H1 (cell line): ENCODE measurements at regions of chr2 and their contacts with region 1.

Region 1: GRCh38 chr2:231925303-231926179 is 655 bp downstream of the NPPC start:
- DNase-seq: peak; percentile 59 to 93
- H3K4me3 ChIP-seq: peak overlapping the region; percentile 52 to 75 (median 66)
- H3K27ac ChIP-seq: no peak overlapping the region
- H3K4me1 ChIP-seq: peaks cover 3 to 20% (median 14%) of the 10 kb centered on the region in 4 experiments
- H3K27me3 ChIP-seq: peaks cover 24 to 55% (median 43%) of the 10 kb centered on the region in 4 experiments
- CTCF ChIP-seq: peak in 2 of 3 experiments; percentile 80 to 89; a peak in 3 of 4 replicates
- EP300 ChIP-seq: no peak
- POLR2A ChIP-seq: no peak
- RAD21 ChIP-seq: peak; percentile 56 to 73

Region 2: GRCh38 chr2:231910771-231911170 is 14.8 kb before region 1 on chr2:
- CTCF ChIA-PET with region 1: interaction called, 220 read pairs
- POLR2A ChIA-PET with region 1: interaction called, 3 read pairs
- DNase-seq: no peak
- H3K4me3 ChIP-seq: no peak overlapping the region
- H3K27ac ChIP-seq: no peak overlapping the region
- H3K4me1 ChIP-seq: peaks cover 0 to 6% (median under 1%) of the 10 kb centered on the region in 4 experiments; a peak in 1 of 7 replicates
- H3K27me3 ChIP-seq: no peaks in the 10 kb centered on the region
- CTCF ChIP-seq: no peak
- EP300 ChIP-seq: no peak
- POLR2A ChIP-seq: no peak
- RAD21 ChIP-seq: no peak

Region 3: DNA sequence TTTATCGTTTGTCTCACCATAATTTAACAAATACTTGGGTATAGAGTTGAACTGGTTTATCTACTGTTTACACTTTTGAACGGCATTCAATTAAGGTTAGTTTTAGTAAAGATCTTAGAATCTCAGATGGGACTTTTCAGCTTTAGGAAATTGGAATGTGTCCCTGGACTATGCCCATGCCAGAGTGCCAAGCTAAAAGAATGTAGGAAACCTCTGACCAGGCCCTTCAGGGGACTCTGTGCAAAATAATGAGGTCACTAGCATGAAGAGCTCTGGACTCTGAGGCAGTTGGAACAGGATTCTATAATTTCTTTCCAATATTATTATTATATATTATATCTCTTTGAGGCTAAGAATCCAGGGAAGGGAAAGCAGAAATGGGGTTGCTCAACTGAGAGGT is 49.5 kb after region 1 on chr2:
- CTCF ChIA-PET with region 1: interaction called, 10 read pairs
- POLR2A ChIA-PET with region 1: no interaction called
- DNase-seq: no peak
- H3K4me3 ChIP-seq: no peak overlapping the region
- H3K27ac ChIP-seq: no peak overlapping the region
- H3K4me1 ChIP-seq: peaks cover 0 to 3% (median 0%) of the 10 kb centered on the region in 4 experiments; a peak in 1 of 7 replicates
- H3K27me3 ChIP-seq: no peaks in the 10 kb centered on the region
- CTCF ChIP-seq: no peak
- EP300 ChIP-seq: no peak
- POLR2A ChIP-seq: no peak
- RAD21 ChIP-seq: no peak

Region 4: DNA sequence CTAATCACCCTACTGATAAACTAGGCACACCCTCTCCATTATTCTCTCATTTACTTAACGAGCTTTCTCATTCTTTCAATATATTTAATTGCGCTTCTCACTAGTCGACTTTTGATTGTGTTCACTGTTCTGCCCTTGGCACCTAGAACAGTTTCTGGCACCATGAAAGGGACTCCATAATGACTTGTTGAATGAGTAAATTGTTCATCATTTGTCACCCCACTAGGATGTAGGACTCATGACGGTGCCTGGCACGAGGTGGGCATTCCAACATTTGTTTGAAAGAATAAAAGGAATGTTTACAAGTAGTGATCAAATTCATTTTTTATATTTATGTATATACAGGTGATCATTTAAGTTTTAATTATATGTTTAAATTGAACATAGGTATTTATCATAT is 159.6 kb after region 1 on chr2:
- CTCF ChIA-PET with region 1: interaction called, 10 read pairs
- POLR2A ChIA-PET with region 1: no interaction called
- DNase-seq: no peak
- H3K4me3 ChIP-seq: no peak overlapping the region
- H3K27ac ChIP-seq: no peak overlapping the region
- H3K4me1 ChIP-seq: no peaks in the 10 kb centered on the region
- H3K27me3 ChIP-seq: no peaks in the 10 kb centered on the region; a peak in 1 of 7 replicates
- CTCF ChIP-seq: no peak
- EP300 ChIP-seq: no peak
- POLR2A ChIP-seq: no peak
- RAD21 ChIP-seq: no peak

Region 5: GRCh38 chr2:232230557-232230956 is 305.0 kb after region 1 on chr2:
- CTCF ChIA-PET with region 1: interaction called, 26 read pairs
- POLR2A ChIA-PET with region 1: no interaction called
- DNase-seq: peak; percentile 13 to 74
- H3K4me3 ChIP-seq: no peak overlapping the region
- H3K27ac ChIP-seq: no peak overlapping the region
- H3K4me1 ChIP-seq: peaks cover 5 to 13% (median 8%) of the 10 kb centered on the region in 4 experiments
- H3K27me3 ChIP-seq: no peaks in the 10 kb centered on the region
- CTCF ChIP-seq: peak; percentile 58 to 87 (median 59)
- EP300 ChIP-seq: no peak
- POLR2A ChIP-seq: no peak
- RAD21 ChIP-seq: peak; percentile 74 to 78

Region 6: DNA sequence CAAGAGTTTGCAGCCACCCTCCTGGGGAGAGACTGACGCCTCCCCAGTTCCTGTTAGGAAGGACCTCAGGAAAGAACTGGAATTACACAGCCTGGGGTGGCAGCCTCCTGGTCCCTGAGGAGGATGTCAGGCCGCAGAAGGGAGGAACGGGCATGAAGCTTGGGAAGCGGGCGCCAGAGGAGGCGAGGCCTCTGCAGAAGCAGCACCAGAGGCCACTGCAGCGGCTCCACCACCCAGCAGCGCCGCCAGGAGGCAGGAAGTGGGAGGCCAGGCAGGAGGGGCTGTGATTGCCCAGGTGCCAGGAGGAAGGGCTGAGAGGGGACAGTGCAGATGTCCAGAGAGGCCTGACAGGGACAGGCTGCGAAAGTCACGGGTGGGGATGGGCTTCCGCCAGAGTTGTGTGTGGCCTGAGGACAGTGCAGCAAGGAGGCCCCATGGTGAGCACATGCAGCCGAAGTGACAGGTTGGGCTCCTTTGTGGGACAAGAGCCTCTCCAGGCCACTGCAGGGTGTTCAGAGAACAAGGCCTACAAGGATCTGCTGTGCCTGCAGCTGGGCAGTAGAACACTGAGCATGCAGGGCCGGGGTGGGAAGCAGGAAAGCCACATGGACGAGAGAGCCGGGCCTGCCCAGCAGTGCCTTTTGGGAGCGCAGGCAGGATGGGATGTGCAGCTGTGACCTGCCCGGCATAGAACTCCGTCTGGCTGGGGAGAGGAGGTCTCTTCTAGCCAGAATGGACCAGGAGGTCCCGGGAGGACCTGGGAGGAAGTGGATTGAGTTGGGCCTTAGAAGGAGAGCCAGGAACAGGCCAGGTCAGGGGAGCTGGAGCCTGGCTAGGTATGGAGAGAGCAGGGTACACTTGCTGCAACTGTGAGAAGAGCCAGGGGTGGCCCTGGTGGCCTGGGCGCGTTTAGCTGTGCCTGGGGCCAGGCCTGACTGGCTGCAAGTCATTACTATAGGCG is 413.9 kb after region 1 on chr2:
- CTCF ChIA-PET with region 1: interaction called, 10 read pairs
- POLR2A ChIA-PET with region 1: no interaction called
- DNase-seq: peak in 1 of 2 experiments; percentile 89
- H3K4me3 ChIP-seq: no peak overlapping the region
- H3K27ac ChIP-seq: no peak overlapping the region
- H3K4me1 ChIP-seq: no peaks in the 10 kb centered on the region; a peak in 1 of 7 replicates
- H3K27me3 ChIP-seq: no peaks in the 10 kb centered on the region
- CTCF ChIP-seq: peak in 2 of 3 experiments; percentile 82 to 87; a peak in 3 of 4 replicates
- EP300 ChIP-seq: no peak
- POLR2A ChIP-seq: no peak
- RAD21 ChIP-seq: peak; percentile 54 to 62